ENCODE measurements at regions of chr12 and their contacts with region 1.

Region 1: GRCh38 chr12:25195056-25195971 is at the starts of genes DNAI7 and ETFRF1:
- DNase-seq: peak; percentile 71
- H3K4me3 ChIP-seq: peak within 1 kb of the TSS; percentile 93
- H3K27me3 ChIP-seq: no peaks in the 10 kb centered on the region
- CTCF ChIP-seq: no peak
- polyA plus RNA-seq, gene DNAI7: 0.11 and 0.21 TPM in 2 replicates
- polyA plus RNA-seq, gene ETFRF1: 6.0 and 13.6 TPM in 2 replicates

Region 2: DNA sequence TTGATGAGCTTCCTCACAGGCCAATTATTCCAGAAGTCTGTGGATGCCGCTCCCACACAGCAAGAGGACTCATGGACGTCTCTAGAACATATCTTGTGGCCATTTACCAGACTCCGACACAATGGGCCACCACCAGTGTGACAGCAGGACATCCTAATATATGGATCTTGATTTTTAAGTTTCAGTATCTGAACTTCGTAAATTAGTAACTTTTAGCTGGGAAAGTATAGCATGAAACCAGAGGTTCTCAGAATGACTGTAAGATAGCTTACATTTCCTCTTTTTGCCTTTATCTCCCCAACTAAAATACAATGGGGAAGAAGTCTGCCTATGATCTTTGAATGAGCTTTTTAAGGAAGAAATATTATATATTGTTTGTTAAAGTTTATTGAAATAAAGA is 87.4 kb before region 1 on chr12:
- CTCF ChIA-PET with region 1: no interaction called
- POLR2A ChIA-PET with region 1: no interaction called
- DNase-seq: no peak
- H3K4me3 ChIP-seq: no peak overlapping the region
- H3K27me3 ChIP-seq: no peaks in the 10 kb centered on the region
- CTCF ChIP-seq: no peak

Region 3: GRCh38 chr12:25208554-25208953 is 13.2 kb after region 1 on chr12:
- CTCF ChIA-PET with region 1: interaction called, 15 read pairs
- POLR2A ChIA-PET with region 1: no interaction called
- DNase-seq: no peak
- H3K4me3 ChIP-seq: no peak overlapping the region
- H3K27me3 ChIP-seq: no peaks in the 10 kb centered on the region
- CTCF ChIP-seq: no peak

Region 4: DNA sequence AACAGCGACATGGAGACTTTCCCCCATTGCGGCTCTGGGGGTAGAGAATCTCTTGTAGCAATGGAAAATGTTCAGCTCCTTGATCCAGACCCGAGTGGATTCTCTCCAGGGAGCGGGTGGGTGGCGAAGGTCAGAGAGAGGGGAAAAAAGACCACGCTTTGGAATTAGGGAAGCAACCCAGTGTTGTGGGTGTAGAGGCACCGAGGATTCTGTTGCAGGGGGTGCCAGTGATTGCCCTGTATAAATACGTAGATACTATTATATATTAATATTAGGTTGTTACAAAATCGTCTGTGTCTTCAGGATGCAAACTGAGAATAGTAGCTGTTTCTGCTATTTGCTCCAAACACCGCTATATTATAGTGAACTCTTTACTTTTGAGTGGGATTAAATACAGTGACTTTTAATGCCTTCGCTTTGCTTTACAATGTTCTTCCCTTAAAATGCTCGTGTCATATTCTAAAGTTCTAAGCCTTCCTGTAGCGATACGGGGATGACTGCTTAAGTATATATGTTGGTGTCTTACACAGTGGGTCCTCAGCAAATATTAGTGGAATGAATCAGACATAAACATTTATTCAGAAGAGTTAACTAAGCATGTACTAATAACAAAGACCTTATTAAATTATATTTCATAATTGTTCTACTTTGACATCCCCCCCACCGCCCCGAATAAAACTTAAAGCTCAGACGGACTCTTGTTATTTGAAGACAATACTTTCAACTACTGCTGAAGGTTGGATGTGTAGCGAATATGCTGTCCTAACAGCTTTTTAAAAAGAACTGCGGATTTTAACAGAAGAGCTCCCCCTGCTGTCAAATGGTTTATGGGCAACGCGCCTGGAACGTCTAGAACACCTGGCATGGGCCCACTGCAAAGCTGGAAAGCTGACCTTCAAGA is 191.8 kb after region 1 on chr12:
- CTCF ChIA-PET with region 1: interaction called, 10 read pairs
- POLR2A ChIA-PET with region 1: no interaction called
- DNase-seq: peak; percentile 44
- H3K4me3 ChIP-seq: peak overlapping the region; percentile 56
- H3K27me3 ChIP-seq: no peaks in the 10 kb centered on the region
- CTCF ChIP-seq: peak; percentile 82